ENCODE measurements at regions of chr4 and their contacts with region 1.

Region 1: GRCh38 chr4:156968479-156968984 is 3.1 kb downstream of the PDGFC start:
- DNase-seq: no peak
- H3K4me3 ChIP-seq: peak overlapping the region; percentile 88
- CTCF ChIP-seq: peak; percentile 60

Region 2: DNA sequence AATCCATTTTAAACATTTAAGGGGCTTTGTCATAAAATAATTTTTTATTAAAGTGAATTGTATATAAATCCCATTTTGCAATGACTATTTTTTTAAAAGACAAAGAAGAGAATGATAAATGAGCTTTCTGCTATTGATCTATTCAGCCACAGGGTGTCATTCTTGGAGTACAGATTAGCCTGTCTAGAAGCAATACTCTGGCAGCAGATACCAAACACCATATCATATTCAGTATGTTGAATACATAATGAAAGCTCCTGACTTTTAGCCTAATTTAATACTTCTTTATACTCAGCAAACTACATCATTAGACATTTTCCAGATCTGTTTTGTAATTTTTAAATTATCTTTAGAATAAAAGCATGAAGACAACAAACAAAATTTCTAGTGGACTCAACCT is 493.2 kb before region 1 on chr4:
- CTCF ChIA-PET with region 1: interaction called, 64 read pairs
- POLR2A ChIA-PET with region 1: interaction called, 13 read pairs
- DNase-seq: peak; percentile 28
- H3K4me3 ChIP-seq: no peak overlapping the region
- CTCF ChIP-seq: peak; percentile 46

Region 3: DNA sequence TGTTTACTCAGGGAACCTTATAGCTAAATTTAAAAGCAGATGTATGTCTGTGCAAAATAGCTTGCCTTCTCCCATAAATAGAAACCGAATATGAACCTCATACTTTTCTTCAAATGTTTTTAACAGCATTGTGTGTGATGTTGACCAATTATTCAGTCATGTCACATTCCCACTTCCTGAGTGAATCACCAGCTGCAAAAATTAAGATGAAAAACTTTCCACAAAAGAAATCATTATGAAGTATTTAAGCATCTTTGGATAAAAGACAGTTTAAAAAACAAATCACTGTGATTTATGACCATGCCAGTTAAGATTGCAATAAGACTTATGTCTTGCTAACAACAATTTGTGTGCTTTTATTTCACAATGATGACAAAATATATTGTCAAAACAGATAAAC is 217.0 kb before region 1 on chr4:
- CTCF ChIA-PET with region 1: interaction called, 10 read pairs
- POLR2A ChIA-PET with region 1: no interaction called
- DNase-seq: no peak
- H3K4me3 ChIP-seq: no peak overlapping the region
- CTCF ChIP-seq: no peak

Region 4: GRCh38 chr4:156771171-156771837 is 197.2 kb before region 1 on chr4:
- CTCF ChIA-PET with region 1: interaction called, 42 read pairs
- POLR2A ChIA-PET with region 1: no interaction called
- DNase-seq: no peak
- H3K4me3 ChIP-seq: no peak overlapping the region
- CTCF ChIP-seq: no peak

Region 5: GRCh38 chr4:156790866-156791265 is 177.7 kb before region 1 on chr4:
- CTCF ChIA-PET with region 1: interaction called, 10 read pairs
- POLR2A ChIA-PET with region 1: interaction called, 3 read pairs
- DNase-seq: no peak
- H3K4me3 ChIP-seq: no peak overlapping the region
- CTCF ChIP-seq: no peak

Region 6: DNA sequence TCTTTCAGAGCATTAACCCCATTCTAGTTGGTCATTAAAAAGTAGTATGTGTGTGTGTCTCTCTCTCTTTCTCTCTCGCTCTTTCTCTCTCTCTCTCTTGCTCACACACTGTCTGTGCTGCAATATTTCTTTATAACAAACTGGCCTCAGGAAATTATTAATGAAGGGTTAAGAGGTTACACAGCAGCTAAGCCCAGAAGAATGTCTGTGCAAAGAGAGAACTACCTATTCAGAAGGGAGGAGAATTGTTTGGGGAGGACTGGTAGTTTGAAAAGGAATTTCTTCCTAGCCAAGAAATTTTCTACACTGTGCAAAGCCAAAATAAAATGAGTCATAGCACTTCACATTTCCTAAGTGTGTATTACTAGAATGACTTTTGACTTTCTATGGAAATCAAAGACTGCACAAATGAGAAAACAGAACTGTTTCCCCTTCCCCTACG is 19.1 kb before region 1 on chr4:
- CTCF ChIA-PET with region 1: interaction called, 15 read pairs
- POLR2A ChIA-PET with region 1: no interaction called
- DNase-seq: no peak
- H3K4me3 ChIP-seq: no peak overlapping the region
- CTCF ChIP-seq: no peak

Region 7: GRCh38 chr4:157128395-157128794 is 159.9 kb after region 1 on chr4:
- CTCF ChIA-PET with region 1: interaction called, 12 read pairs
- POLR2A ChIA-PET with region 1: no interaction called
- DNase-seq: no peak
- H3K4me3 ChIP-seq: no peak overlapping the region
- CTCF ChIP-seq: peak; percentile 27

Measured in AG04449 (cell line).